CD4-positive, alpha-beta T cell (primary cell): ENCODE measurements at regions of chr2 and their contacts with region 1.

Region 1: DNA sequence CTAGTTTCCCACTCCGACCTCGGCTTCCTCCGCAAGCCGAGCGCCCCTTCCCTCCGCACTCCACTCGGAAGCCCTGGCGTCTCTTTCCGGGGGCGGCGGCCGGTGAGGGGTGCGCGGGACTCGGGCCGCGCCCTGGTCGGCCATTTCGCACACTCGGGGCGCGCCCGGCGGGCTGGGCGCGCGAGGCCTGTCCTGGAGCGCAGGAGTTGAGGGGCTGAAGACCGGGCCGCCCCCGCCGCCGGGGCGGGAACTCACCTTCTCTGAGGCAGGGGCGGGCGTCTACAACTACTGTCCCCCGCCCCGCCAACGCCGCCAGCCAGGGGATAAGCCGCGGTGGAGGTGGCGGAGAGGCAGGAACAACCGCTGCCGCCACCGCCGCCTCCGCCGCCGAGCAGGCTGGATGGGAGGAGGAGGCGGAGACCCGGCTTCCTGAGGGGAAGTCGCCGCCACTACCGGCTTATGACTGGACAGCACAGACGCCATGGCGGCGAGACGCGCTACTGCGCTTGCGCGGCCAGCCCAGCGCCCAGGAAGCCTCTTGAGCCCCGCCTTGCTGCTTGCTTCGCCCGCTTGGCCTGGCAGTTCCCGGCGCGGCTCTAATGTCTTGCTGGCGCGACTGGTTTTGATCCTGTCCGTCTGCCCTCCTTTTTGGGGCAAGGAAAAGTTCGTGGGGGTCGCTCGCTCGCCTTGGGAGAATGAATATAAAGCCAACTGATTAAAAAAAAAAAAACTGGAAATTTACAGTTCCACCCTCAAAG is at the start of gene KRCC1:
- DNase-seq: peak; percentile 87 to 99 (median 94)
- ATAC-seq: peak; percentile 91
- H3K4me3 ChIP-seq: peak within 1 kb of the TSS; percentile 89
- H3K4me3 Mint-ChIP-seq: peak within 1 kb of the TSS; percentile 96
- H3K27ac ChIP-seq: peak within 1 kb of the TSS; percentile 90 to 97
- H3K27ac Mint-ChIP-seq: peak within 1 kb of the TSS; percentile 93
- H3K4me1 ChIP-seq: peaks cover 18% of the 10 kb centered on the region
- H3K4me1 Mint-ChIP-seq: peaks cover 61% of the 10 kb centered on the region
- H3K27me3 ChIP-seq: no peaks in the 10 kb centered on the region
- H3K27me3 Mint-ChIP-seq: no peaks in the 10 kb centered on the region
- CTCF ChIP-seq: no peak
- total RNA-seq, gene KRCC1: 3.0 to 3.2 TPM

Region 2: DNA sequence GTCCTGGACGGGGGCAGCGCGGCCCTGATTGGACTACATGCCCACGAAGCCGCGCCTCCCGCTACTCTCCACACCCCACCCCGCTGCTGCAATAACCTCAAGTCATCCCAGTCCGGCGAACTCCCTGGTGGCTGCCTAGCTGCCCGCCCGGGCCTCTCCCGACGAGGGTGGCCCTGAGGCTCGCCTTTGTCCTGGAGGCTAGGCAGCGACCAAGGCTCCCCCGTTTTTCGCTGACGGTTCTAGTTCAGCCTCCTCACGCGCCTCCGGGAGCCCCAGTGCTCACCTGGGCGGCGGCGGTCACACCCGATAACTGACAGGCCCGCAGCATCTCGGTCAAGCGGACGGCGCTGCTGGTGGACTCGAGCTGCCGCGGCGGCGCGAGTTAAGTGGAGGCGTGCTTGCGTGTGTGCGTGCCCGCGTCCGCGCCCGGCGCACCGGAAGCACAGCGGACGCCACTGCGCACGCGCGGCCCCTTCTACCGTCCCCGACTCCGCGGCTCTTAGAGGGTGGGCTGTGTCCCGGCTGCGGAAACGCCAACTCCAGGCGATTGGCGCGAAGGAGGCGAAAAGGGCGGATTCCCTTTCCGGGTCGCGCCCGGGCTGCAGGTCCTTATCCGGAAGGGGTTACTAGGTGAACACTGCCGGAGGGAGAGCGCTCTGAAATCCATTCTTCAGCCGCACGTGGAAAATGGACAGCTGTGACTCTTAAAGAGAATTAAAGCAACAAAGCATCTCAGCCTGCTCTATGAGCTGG is 1860.3 kb before region 1 on chr2 and contains the start of gene IMMT:
- CTCF ChIA-PET with region 1: no interaction called
- POLR2A ChIA-PET with region 1: no interaction called
- intact Hi-C with region 1: loop called in 1 of 2 experiments (anchors 10 kb)
- DNase-seq: peak; percentile 84 to 97 (median 90)
- ATAC-seq: peak; percentile 89
- H3K4me3 ChIP-seq: peak within 1 kb of the TSS; percentile 87
- H3K4me3 Mint-ChIP-seq: peak within 1 kb of the TSS; percentile 89
- H3K27ac ChIP-seq: peak within 1 kb of the TSS; percentile 96 to 98
- H3K27ac Mint-ChIP-seq: peak within 1 kb of the TSS; percentile 85
- H3K4me1 ChIP-seq: peaks cover 45% of the 10 kb centered on the region
- H3K4me1 Mint-ChIP-seq: peaks cover 71% of the 10 kb centered on the region
- H3K27me3 ChIP-seq: no peaks in the 10 kb centered on the region
- H3K27me3 Mint-ChIP-seq: no peaks in the 10 kb centered on the region
- CTCF ChIP-seq: no peak
- total RNA-seq, gene IMMT: 39.5 to 40.8 TPM

Region 3: GRCh38 chr2:88003074-88003755 is 52.3 kb before region 1 on chr2:
- CTCF ChIA-PET with region 1: interaction called, 10 read pairs
- POLR2A ChIA-PET with region 1: no interaction called
- intact Hi-C with region 1: no loop called
- DNase-seq: no peak
- ATAC-seq: no peak
- H3K4me3 ChIP-seq: no peak overlapping the region
- H3K4me3 Mint-ChIP-seq: no peak overlapping the region
- H3K27ac ChIP-seq: no peak overlapping the region
- H3K27ac Mint-ChIP-seq: no peak overlapping the region
- H3K4me1 ChIP-seq: peaks cover 8% of the 10 kb centered on the region
- H3K4me1 Mint-ChIP-seq: peaks cover 6% of the 10 kb centered on the region
- H3K27me3 ChIP-seq: no peaks in the 10 kb centered on the region
- H3K27me3 Mint-ChIP-seq: peaks cover 5% of the 10 kb centered on the region
- CTCF ChIP-seq: no peak

Region 4: GRCh38 chr2:88016086-88016959 is 39.2 kb before region 1 on chr2 and contains the start of gene RNU2-63P:
- CTCF ChIA-PET with region 1: interaction called, 6 read pairs
- POLR2A ChIA-PET with region 1: interaction called, 6 read pairs
- intact Hi-C with region 1: loop called (anchors 2 kb)
- DNase-seq: peak; percentile 58 to 89 (median 70)
- ATAC-seq: peak; percentile 89
- H3K4me3 ChIP-seq: peak within 1 kb of the TSS; percentile 93
- H3K4me3 Mint-ChIP-seq: peak within 1 kb of the TSS; percentile 95
- H3K27ac ChIP-seq: peak within 1 kb of the TSS; percentile 67 to 93
- H3K27ac Mint-ChIP-seq: peak within 1 kb of the TSS; percentile 98
- H3K4me1 ChIP-seq: peaks cover 18% of the 10 kb centered on the region
- H3K4me1 Mint-ChIP-seq: peaks cover 26% of the 10 kb centered on the region
- H3K27me3 ChIP-seq: no peaks in the 10 kb centered on the region
- H3K27me3 Mint-ChIP-seq: no peaks in the 10 kb centered on the region
- CTCF ChIP-seq: no peak
- total RNA-seq, gene RNU2-63P: 2.6 to 3.1 TPM

Region 5: DNA sequence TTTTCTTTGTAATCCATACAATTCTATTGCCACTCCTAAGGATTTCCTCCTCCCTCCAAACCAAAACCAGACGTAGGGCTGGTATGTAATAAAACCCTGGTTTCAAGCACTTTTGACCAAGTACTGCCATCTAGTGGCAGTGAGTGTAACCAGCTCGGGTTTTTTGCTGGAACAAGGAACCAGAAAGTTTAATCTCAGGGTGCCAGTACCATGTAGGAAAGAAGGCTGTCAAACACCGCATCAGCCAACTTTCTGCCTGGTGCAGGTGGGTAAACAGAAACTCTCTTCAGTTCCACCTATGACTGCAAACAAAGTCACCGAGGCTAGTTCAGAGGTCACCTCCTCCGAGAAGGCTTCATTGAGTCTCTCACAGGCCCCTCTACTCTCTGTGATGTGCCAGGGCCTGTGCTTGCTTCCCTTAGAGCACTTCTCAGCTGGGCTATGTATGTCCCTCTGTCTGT is 104.4 kb after region 1 on chr2:
- CTCF ChIA-PET with region 1: interaction called, 26 read pairs
- POLR2A ChIA-PET with region 1: interaction called, 11 read pairs
- intact Hi-C with region 1: loop called (anchors 1 kb)
- DNase-seq: peak; percentile 17 to 76 (median 42)
- ATAC-seq: no peak
- H3K4me3 ChIP-seq: no peak overlapping the region
- H3K4me3 Mint-ChIP-seq: no peak overlapping the region
- H3K27ac ChIP-seq: no peak overlapping the region
- H3K27ac Mint-ChIP-seq: no peak overlapping the region
- H3K4me1 ChIP-seq: peaks cover 2% of the 10 kb centered on the region
- H3K4me1 Mint-ChIP-seq: no peaks in the 10 kb centered on the region
- H3K27me3 ChIP-seq: no peaks in the 10 kb centered on the region
- H3K27me3 Mint-ChIP-seq: no peaks in the 10 kb centered on the region
- CTCF ChIP-seq: peak; percentile 94

Region 6: DNA sequence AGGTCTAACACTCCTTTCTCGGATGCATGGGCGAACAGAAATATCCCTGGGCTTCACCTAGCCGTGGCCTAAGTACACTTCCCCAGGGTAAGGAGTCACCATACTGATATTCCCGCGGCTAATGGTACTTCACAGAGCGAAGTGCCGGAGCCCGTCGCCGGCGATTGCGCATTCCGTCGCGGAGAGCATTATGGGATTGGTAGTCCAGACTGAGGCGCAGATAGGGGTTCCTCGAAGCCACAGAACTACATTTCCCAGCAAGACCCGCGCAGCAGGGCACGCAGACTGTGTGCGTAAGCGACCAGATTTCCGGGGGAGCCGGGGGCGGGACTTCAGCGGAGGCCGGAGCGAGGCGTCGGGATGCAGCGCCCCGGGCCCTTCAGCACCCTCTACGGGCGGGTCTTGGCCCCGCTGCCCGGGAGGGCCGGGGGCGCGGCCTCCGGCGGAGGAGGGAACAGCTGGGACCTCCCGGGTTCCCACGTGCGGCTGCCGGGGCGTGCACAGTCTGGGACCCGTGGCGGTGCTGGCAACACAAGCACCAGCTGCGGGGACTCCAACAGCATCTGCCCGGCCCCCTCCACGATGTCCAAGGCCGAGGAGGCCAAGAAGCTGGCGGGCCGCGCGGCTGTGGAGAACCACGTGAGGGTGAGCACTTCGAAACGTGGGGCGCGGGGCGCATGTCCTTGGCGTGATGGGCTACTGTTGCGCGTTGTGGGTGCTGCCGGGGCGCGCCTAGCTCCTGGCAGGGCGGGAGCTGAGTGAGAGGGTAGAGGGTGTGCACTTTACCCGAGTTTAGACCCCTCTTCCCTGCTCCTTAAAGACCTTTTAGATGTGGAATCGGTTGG is 636.0 kb after region 1 on chr2 and contains the start of gene RPIA:
- CTCF ChIA-PET with region 1: no interaction called
- POLR2A ChIA-PET with region 1: no interaction called
- intact Hi-C with region 1: loop called in 1 of 2 experiments (anchors 2 kb)
- DNase-seq: peak; percentile 94 to 100 (median 99)
- ATAC-seq: peak; percentile 94
- H3K4me3 ChIP-seq: peak within 1 kb of the TSS; percentile 77
- H3K4me3 Mint-ChIP-seq: peak within 1 kb of the TSS; percentile 97
- H3K27ac ChIP-seq: peak within 1 kb of the TSS; percentile 78 to 84
- H3K27ac Mint-ChIP-seq: peak within 1 kb of the TSS; percentile 97
- H3K4me1 ChIP-seq: peaks cover 22% of the 10 kb centered on the region
- H3K4me1 Mint-ChIP-seq: peaks cover 70% of the 10 kb centered on the region
- H3K27me3 ChIP-seq: no peaks in the 10 kb centered on the region
- H3K27me3 Mint-ChIP-seq: no peaks in the 10 kb centered on the region
- CTCF ChIP-seq: peak; percentile 57
- total RNA-seq, gene RPIA: 21.6 to 24.7 TPM